Activated naive CD4-positive, alpha-beta T cell treated with anti-CD3 and anti-CD28 coated beads for 36 hours (primary cell): ENCODE measurements at regions of chr13 and their contacts with region 1.

Region 1: GRCh38 chr13:108218044-108218974 is at the start of gene ABHD13:
- DNase-seq: peak; percentile 87
- H3K4me3 Mint-ChIP-seq: peak within 1 kb of the TSS; percentile 90
- H3K27ac Mint-ChIP-seq: peak within 1 kb of the TSS; percentile 94
- H3K4me1 Mint-ChIP-seq: peaks cover 48% of the 10 kb centered on the region
- H3K27me3 Mint-ChIP-seq: no peaks in the 10 kb centered on the region
- total RNA-seq, gene ABHD13: 3.4 to 3.8 TPM

Region 2: GRCh38 chr13:108176685-108177274 is 41.5 kb before region 1 on chr13:
- CTCF ChIA-PET with region 1: interaction called, 3 read pairs
- intact Hi-C with region 1: loop called (anchors 1 kb)
- DNase-seq: peak; percentile 75
- H3K4me3 Mint-ChIP-seq: no peak overlapping the region
- H3K27ac Mint-ChIP-seq: no peak overlapping the region
- H3K4me1 Mint-ChIP-seq: no peaks in the 10 kb centered on the region
- H3K27me3 Mint-ChIP-seq: no peaks in the 10 kb centered on the region

Region 3: DNA sequence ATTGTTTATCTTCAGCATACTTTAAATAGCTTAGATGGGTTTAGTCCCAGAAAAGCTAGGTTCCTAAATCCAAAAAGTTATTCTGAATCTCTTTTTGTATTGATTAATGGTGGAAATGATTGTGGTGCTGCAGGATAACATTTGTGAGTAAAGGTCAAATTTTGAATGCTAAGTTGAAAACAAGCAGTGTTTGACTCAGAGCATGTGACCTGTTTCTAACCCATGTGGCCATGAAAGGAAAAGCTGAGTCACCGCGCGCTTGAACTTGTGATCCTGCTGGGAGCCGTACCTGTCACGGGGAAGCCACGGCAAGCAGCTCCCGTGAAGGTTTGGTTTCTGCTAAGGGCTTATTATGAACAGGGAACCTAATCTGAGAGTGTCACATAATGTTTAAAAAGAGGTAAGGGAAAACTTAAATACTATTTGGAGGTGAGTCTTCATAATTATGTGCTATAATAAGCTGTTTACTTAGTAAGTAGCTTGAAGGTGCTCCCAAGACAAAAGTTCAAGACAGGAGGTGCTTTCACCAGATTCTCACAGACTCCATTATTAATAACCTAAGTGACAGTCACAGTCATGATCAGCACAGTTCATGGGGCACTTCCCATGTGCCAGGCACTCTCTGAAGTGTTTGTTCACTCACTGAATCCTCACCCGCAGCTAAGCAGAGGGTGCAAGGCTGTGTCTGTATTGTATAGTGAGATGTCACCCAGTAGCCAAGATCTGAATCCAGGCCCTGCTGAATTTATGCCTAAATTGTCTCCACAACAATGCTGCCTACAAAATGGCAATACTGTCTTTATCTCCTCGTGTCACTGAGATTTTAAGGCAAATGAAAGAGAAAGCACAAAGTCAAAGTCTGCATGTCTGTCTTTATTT is 697.6 kb after region 1 on chr13:
- CTCF ChIA-PET with region 1: no interaction called
- intact Hi-C with region 1: loop called (anchors 5 kb)
- DNase-seq: peak; percentile 98
- H3K4me3 Mint-ChIP-seq: peak overlapping the region; percentile 68
- H3K27ac Mint-ChIP-seq: peak overlapping the region; percentile 87
- H3K4me1 Mint-ChIP-seq: peaks cover 20% of the 10 kb centered on the region
- H3K27me3 Mint-ChIP-seq: peaks cover 8% of the 10 kb centered on the region